ENCODE measurements at regions of chr11 and their contacts with region 1.

Region 1: DNA sequence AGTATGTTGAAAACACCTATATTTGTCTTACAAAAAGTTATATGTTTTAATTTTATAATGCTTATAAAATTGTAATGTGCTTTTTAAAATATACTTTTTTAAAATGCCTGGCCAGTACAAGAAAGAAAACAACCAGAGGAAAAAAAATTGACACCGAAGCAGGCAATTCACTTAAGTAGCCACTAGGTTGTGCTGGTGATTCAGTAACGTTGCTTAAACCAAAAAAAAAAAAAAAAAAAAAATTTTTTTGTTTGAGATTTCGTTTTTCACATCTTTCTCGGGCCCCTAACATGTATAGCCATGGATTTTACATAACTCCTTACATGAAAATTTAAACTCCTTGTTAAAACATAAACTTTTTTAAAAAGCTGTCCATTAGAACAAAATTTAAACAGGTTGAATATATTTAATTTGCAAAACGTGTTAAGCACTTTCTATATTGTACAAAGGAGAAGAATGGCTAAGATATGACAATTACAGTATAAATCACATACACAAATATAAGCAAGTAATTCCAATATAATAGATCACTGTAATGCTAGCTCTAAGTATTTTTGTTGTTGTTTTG is 9.2 kb downstream of the OR8B4 start:
- DNase-seq: peak in 2 of 42 donors; percentile 12 to 22

Region 2: DNA sequence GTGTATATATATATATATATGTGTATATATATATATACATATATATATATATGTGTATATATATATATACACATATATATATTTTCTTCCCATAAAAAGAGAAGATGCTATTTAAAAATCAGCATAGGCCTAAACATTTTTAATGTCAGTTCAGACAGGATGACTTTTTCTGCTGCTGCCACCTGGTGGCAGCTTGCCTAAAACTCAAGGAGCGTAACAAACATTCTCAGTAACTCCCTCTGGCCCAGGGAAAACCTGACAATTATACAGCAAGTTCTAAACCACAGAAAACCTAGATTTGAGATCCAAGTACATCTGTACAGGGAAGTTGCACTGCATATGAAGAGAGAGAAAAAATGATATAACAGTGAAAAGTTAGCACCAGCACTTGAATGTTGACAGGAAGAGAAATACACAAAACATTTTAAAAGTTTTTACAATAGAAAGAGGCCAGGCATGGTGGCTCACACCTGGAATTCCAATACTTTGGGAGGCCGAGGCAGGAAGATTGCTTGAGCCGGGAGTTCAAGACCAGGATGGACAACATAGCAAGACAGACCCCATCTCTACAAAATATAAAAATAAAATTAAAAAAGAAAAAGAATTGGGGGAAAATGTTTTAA is 170.9 kb after region 1 on chr11:
- intact Hi-C with region 1: loop called (anchors 5 kb)
- DNase-seq: peak; percentile 18 to 83 (median 65)

Measured in head of caudate nucleus (tissue), 42 donors.